ENCODE measurements at regions of chr1 and their contacts with region 1.

Region 1: DNA sequence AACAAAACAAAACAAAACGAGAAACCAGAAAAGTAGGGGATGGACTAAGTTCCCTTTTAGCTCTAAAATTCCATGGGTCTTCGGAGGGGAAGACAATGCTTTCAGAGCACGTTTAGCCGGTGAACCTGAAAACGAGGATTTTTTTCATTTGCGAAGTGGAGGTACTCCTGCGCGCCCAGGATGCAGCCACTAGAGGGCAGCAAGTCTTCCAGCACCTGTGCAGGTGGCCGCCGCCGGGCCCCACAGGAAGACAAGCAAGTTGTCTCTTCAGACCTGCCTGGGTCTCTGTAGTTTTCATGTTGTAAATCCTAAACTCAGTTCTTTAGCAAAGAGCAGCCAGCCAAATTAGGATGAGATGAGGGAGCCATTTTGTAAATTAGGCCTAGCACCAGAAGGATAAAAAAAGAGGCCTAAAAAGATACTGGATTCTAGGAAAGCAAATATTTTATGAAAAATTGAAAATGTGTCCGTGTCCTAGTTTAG is 17.7 kb upstream of the SNX27 start:
- DNase-seq: peak; percentile 94
- ATAC-seq: peak; percentile 99
- H3K4me3 Mint-ChIP-seq: peak overlapping the region; percentile 49
- H3K27ac Mint-ChIP-seq: no peak overlapping the region
- H3K4me1 Mint-ChIP-seq: peaks cover 6% of the 10 kb centered on the region
- H3K27me3 Mint-ChIP-seq: peaks cover 7% of the 10 kb centered on the region
- CTCF ChIP-seq: peak; percentile 92

Region 2: DNA sequence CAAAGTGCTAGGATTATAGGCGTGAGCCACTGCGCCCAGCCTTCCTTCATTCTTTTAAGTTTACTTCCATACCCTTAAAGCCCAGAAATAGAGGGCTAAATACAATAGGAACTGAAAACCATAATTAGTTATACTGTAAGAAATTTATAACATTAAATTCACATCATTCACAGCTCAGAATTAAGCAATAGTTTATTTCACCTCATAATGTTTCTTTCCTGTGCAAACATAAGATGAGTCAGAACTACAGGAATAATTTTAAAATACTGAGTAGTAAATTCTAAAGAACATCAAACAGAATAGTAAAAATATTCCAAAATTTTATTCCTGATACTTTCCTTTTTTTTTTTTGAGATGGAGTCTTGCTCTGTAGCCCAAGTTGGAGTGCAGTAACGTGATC is 159.0 kb before region 1 on chr1:
- CTCF ChIA-PET with region 1: interaction called, 12 read pairs
- POLR2A ChIA-PET with region 1: no interaction called
- intact Hi-C with region 1: no loop called
- DNase-seq: no peak
- ATAC-seq: no peak
- H3K4me3 Mint-ChIP-seq: no peak overlapping the region
- H3K27ac Mint-ChIP-seq: no peak overlapping the region
- H3K4me1 Mint-ChIP-seq: peaks cover 32% of the 10 kb centered on the region
- H3K27me3 Mint-ChIP-seq: no peaks in the 10 kb centered on the region
- CTCF ChIP-seq: no peak

Region 3: DNA sequence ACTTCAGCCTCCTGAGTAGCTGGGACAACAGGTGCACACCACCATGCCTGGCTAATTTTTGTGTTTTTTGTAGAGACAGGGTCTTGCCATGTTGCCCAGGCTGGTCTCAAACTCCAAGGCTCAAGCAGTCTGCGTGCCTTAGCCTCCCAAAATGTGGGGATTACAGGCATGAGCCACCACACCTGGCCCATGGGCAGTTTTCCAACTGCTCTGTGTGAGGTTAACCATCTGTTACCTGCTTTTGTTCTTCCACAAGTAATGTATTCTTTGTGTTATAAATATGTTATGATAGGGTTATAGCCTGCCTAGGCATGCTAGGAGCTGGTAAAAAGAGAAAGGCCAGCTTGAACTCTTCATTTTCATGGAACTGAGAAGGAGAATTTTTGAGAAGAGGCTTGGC is 23.4 kb before region 1 on chr1:
- CTCF ChIA-PET with region 1: interaction called, 12 read pairs
- POLR2A ChIA-PET with region 1: no interaction called
- intact Hi-C with region 1: no loop called
- DNase-seq: no peak
- ATAC-seq: no peak
- H3K4me3 Mint-ChIP-seq: no peak overlapping the region
- H3K27ac Mint-ChIP-seq: no peak overlapping the region
- H3K4me1 Mint-ChIP-seq: peaks cover 8% of the 10 kb centered on the region
- H3K27me3 Mint-ChIP-seq: no peaks in the 10 kb centered on the region
- CTCF ChIP-seq: no peak

Region 4: DNA sequence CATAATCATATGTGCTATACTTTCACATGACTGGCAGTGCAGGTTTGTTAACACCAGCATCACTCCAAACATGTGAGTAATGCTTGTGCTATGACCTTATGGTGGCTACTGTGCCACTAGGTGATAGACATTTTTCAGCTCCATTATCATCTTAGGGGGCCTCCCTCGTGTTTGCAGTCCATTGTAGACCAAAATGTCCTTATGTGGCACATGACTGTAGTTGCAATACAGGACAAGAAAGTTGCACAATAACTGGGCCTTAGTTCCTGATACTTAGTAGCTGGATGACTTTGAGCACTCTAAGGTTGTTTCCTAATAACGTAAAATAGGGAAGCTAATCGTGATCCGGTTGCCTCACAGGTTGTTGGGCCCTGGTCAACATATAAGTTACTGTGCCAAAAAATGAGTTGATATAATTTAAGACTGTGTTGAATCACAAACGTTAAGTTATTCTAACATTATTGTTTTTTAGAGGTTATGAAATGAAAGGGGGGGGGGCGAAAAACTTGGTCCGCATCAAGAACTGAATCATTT is 17.2 kb after region 1 on chr1:
- CTCF ChIA-PET with region 1: interaction called, 26 read pairs
- POLR2A ChIA-PET with region 1: interaction called, 5 read pairs
- intact Hi-C with region 1: no loop called
- DNase-seq: peak; percentile 14
- ATAC-seq: peak; percentile 19
- H3K4me3 Mint-ChIP-seq: peak overlapping the region; percentile 88
- H3K27ac Mint-ChIP-seq: peak overlapping the region; percentile 77
- H3K4me1 Mint-ChIP-seq: peaks cover 39% of the 10 kb centered on the region
- H3K27me3 Mint-ChIP-seq: peaks cover 5% of the 10 kb centered on the region
- CTCF ChIP-seq: no peak

Region 5: GRCh38 chr1:151728151-151729054 is 134.2 kb after region 1 on chr1:
- CTCF ChIA-PET with region 1: interaction called, 34 read pairs
- POLR2A ChIA-PET with region 1: no interaction called
- intact Hi-C with region 1: no loop called
- DNase-seq: no peak
- ATAC-seq: no peak
- H3K4me3 Mint-ChIP-seq: no peak overlapping the region
- H3K27ac Mint-ChIP-seq: no peak overlapping the region
- H3K4me1 Mint-ChIP-seq: no peaks in the 10 kb centered on the region
- H3K27me3 Mint-ChIP-seq: peaks cover 35% of the 10 kb centered on the region
- CTCF ChIP-seq: no peak

Region 6: DNA sequence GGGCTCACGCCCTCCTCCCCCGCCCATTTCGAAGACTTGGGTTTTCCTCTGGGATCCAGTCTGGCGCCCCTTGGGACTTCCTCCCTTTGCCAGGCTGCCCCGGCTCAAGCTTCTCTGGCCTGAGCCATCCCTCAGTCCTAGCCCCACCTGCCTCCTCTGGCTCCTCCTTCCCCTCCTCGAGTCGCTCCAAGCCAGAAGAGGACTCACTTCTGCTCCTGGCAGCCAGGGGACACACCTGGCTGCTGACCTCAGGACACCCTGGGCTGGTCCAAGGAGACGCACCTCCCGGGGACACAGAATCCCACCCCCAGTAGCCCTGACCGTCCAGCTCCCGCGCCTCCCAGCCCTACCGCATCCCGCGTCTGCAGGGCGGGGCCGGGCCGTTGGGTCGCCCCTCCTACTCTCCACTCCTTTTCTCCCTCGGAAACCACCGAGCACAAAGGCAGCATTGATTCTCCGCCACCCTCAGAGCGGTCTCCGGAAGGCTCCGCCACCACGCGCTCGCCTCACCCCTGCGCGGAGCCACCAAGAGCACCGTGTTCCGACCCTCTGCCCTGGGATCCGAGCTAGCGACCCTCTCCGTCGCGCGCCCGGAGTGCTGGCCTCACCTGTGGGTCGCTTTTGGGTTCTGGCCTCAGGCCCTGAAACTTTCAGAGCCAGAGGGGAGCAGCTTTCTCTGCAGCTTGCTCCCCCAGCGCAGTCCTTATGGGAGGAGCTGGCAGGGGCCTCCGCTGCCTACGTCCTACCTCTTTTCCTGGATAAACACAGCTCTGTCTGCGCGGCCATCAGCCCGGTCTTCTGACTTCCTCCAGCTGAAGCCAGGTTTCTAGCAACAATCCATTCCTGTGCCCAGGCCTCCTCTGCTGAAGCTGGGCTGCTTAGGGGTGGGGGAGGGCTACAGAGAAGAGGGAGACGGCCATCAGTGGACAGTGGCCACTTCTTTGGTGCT is 245.5 kb after region 1 on chr1 and contains the start of gene C2CD4D:
- CTCF ChIA-PET with region 1: interaction called, 17 read pairs
- POLR2A ChIA-PET with region 1: no interaction called
- intact Hi-C with region 1: loop called (anchors 10 kb)
- DNase-seq: peak; percentile 79
- ATAC-seq: peak; percentile 69
- H3K4me3 Mint-ChIP-seq: peak within 1 kb of the TSS; percentile 80
- H3K27ac Mint-ChIP-seq: peak within 1 kb of the TSS; percentile 84
- H3K4me1 Mint-ChIP-seq: peaks cover 35% of the 10 kb centered on the region
- H3K27me3 Mint-ChIP-seq: no peaks in the 10 kb centered on the region
- CTCF ChIP-seq: no peak
- total RNA-seq, gene C2CD4D: 1.3 to 1.6 TPM

Measured in activated CD8-positive, alpha-beta T cell treated with anti-CD3 and anti-CD28 coated beads for 36 hours (primary cell).